H1 (cell line): ENCODE measurements at regions of chr2 and their contacts with region 1.

Region 1: DNA sequence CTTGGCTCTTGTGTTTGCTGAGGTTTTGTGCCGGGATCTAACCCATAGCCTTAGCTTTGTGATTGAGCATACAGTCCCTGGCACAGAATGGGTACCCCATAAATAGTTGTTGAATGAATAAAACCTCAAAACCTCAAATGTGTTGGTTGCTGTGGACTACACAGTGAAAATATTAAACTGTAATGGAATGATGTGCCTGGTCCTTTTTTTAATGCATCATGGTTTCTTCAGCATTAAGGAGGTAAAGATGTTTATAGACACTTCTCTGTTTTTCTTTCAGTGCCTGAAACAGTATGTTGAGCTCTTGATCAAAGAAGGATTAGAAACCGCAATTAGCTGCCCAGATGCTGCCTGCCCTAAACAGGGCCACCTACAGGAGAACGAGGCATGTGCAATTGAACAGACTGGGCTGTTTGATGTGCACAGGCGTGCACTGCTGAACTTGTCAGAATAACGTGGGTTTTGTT is 97.0 kb downstream of the RNF144A start:
- DNase-seq: no peak
- H3K4me3 ChIP-seq: no peak overlapping the region
- H3K27ac ChIP-seq: no peak overlapping the region
- H3K4me1 ChIP-seq: peaks cover 0 to 12% (median 6%) of the 10 kb centered on the region in 4 experiments; a peak in 4 of 7 replicates
- H3K27me3 ChIP-seq: no peaks in the 10 kb centered on the region
- CTCF ChIP-seq: peak; percentile 62 to 83 (median 77)
- EP300 ChIP-seq: no peak
- POLR2A ChIP-seq: no peak
- RAD21 ChIP-seq: peak; percentile 45 to 57

Region 2: DNA sequence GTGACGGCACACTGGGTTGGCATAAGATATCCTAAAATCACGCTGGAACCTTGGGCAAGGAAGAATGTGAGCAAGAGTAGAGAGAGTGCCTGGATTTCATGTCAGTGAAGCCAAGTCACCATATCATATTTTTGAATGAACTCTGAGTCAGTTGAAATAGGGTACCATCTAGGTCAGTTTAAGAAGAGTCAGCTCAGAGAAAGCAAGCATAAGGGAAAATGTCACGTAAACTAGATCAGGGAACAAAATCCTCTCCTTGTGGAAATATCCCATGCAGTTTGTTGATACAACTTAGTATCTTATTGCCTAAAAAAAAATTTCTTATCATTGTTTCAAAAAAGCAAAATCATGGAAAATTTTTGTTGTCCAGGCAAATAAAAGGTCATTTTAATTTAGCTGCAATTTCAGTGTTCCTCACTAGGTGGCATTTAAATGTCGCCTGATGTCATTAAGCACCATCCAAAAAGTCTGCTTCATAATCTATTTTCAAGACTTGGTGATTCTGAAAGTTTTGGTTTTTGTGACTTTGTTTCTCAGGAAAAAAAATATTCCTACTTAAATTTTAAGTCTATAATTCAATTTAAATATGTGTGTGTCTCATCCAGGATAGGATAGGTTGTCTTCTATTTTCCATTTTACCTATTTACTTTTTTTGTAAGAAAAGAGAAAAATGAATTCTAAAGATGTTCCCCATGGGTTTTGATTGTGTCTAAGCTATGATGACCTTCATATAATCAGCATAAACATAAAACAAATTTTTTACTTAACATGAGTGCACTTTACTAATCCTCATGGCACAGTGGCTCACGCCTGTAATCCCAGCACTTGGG is 117.1 kb before region 1 on chr2:
- CTCF ChIA-PET with region 1: interaction called, 13 read pairs
- POLR2A ChIA-PET with region 1: no interaction called
- DNase-seq: no peak
- H3K4me3 ChIP-seq: no peak overlapping the region
- H3K27ac ChIP-seq: no peak overlapping the region
- H3K4me1 ChIP-seq: no peaks in the 10 kb centered on the region
- H3K27me3 ChIP-seq: no peaks in the 10 kb centered on the region
- CTCF ChIP-seq: peak in 2 of 3 experiments; percentile 39 to 52; a peak in 2 of 4 replicates
- EP300 ChIP-seq: no peak
- POLR2A ChIP-seq: no peak
- RAD21 ChIP-seq: peak; percentile 63 to 66

Region 3: DNA sequence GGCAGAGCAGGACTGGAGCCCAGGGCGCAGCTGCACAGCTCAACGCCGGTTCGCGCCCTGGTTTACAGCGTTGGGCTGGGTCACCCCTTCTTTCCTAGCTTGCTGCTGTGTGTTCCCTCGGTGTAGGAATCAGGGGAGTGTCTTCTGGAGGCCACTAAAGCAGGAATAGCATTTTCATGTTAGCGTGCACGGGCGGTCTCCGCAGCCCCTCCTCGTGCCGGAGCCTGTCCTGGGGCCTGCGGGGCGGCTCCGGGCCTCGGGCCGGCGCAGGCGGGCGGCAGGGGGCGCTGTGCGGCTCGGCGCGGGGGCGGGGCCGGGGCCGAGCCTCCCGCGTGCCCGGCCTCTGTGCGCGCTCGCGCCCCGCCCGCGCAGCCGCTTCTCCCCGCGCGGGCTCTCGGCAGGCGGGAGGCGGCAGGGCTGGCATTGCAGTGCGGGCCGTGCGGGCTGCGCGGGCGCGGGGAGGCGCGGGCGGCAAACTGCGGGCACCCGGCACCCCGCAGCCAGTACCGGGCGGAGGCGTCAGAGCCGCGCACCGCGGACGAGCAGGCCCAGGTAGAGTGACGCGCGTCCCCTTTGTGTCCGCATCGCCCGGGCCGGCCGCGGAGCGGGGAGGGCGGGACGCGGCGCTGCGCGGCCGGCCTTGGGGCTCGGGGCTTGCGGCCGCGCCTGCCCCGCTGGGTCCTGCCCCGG is 97.0 kb before region 1 on chr2 and contains the start of gene RNF144A:
- CTCF ChIA-PET with region 1: interaction called, 22 read pairs
- POLR2A ChIA-PET with region 1: no interaction called
- DNase-seq: peak in 1 of 2 experiments; percentile 87
- H3K4me3 ChIP-seq: peak within 1 kb of the TSS; percentile 49 to 90 (median 60)
- H3K27ac ChIP-seq: no peak within 1 kb of the TSS; the same call in 1 of the 2 replicates
- H3K4me1 ChIP-seq: peaks cover 5 to 17% (median 9%) of the 10 kb centered on the region in 4 experiments
- H3K27me3 ChIP-seq: peaks cover 0 to 12% (median under 1%) of the 10 kb centered on the region in 4 experiments; a peak in 2 of 7 replicates
- CTCF ChIP-seq: peak; percentile 43 to 62 (median 53)
- EP300 ChIP-seq: no peak
- POLR2A ChIP-seq: no peak; a peak in 2 of 3 replicates
- RAD21 ChIP-seq: peak in 1 of 2 experiments; percentile 4; a peak in 1 of 4 replicates
- total RNA-seq, gene RNF144A: 15.0 and 15.1 TPM in 2 replicates

Region 4: GRCh38 chr2:6922201-6922685 is 92.0 kb before region 1 on chr2:
- CTCF ChIA-PET with region 1: interaction called, 22 read pairs
- POLR2A ChIA-PET with region 1: no interaction called
- DNase-seq: no peak
- H3K4me3 ChIP-seq: no peak overlapping the region
- H3K27ac ChIP-seq: no peak overlapping the region
- H3K4me1 ChIP-seq: peaks cover 1 to 5% (median 3%) of the 10 kb centered on the region in 4 experiments; a peak in 5 of 7 replicates
- H3K27me3 ChIP-seq: peaks cover 0 to 6% (median 0%) of the 10 kb centered on the region in 4 experiments; a peak in 2 of 7 replicates
- CTCF ChIP-seq: peak in 2 of 3 experiments; percentile 22 to 31; a peak in 2 of 4 replicates
- EP300 ChIP-seq: no peak
- POLR2A ChIP-seq: no peak
- RAD21 ChIP-seq: peak; percentile 37 to 48

Region 5: GRCh38 chr2:6999211-6999877 is 14.9 kb before region 1 on chr2:
- CTCF ChIA-PET with region 1: interaction called, 132 read pairs
- POLR2A ChIA-PET with region 1: interaction called, 3 read pairs
- DNase-seq: no peak
- H3K4me3 ChIP-seq: no peak overlapping the region
- H3K27ac ChIP-seq: no peak overlapping the region
- H3K4me1 ChIP-seq: no peaks in the 10 kb centered on the region
- H3K27me3 ChIP-seq: no peaks in the 10 kb centered on the region
- CTCF ChIP-seq: no peak
- EP300 ChIP-seq: no peak
- POLR2A ChIP-seq: no peak
- RAD21 ChIP-seq: no peak

Region 6: DNA sequence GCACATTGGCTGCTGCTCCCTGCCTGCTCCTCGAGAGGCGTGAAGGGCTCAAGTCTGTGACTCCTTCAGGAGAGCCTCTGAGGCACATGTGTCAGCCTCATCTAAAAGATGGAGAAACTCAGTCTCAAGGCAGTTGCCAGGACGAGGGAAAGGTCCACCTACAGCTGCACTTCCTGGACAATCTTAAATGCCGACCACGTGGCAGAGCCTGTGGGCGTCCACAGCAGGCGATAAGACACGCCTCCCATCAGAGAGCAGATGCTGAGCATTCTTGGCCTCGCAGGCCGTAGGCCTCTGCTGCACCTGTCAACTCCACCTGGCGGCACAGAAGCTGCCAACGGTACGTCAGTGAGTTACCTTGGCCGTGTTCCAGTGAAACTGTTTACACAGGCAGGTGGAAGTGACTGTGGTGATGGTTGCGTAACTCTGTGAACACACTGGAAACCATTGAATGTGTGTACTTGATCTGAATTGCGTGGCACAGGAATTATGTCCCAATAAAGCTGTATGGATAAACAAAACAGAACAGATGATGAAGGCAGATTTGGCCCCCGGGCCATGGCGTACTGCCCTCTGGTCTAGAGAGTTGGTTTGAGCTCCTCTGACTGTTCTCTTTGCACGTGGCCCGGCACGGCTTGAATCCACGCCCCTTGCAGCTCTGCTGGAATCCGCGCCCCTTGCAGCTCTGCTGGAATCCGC is 17.5 kb after region 1 on chr2:
- CTCF ChIA-PET with region 1: interaction called, 61 read pairs
- POLR2A ChIA-PET with region 1: no interaction called
- DNase-seq: no peak
- H3K4me3 ChIP-seq: no peak overlapping the region
- H3K27ac ChIP-seq: no peak overlapping the region
- H3K4me1 ChIP-seq: no peaks in the 10 kb centered on the region; a peak in 1 of 7 replicates
- H3K27me3 ChIP-seq: no peaks in the 10 kb centered on the region
- CTCF ChIP-seq: no peak
- EP300 ChIP-seq: no peak
- POLR2A ChIP-seq: no peak
- RAD21 ChIP-seq: no peak

Region 7: GRCh38 chr2:7077660-7078267 is 63.6 kb after region 1 on chr2:
- CTCF ChIA-PET with region 1: no interaction called
- POLR2A ChIA-PET with region 1: no interaction called
- DNase-seq: no peak
- H3K4me3 ChIP-seq: no peak overlapping the region
- H3K27ac ChIP-seq: no peak overlapping the region
- H3K4me1 ChIP-seq: no peaks in the 10 kb centered on the region
- H3K27me3 ChIP-seq: no peaks in the 10 kb centered on the region
- CTCF ChIP-seq: no peak
- EP300 ChIP-seq: no peak
- POLR2A ChIP-seq: no peak
- RAD21 ChIP-seq: no peak